HAP-1 (cell line): ENCODE measurements at regions of chr19 and their contacts with region 1.

Region 1: GRCh38 chr19:6048808-6049405 is 61.4 kb downstream of the RFX2 start:
- DNase-seq: peak; percentile 74 to 84
- H3K4me3 ChIP-seq: no peak overlapping the region
- H3K4me1 ChIP-seq: no peaks in the 10 kb centered on the region
- H3K27me3 ChIP-seq: no peaks in the 10 kb centered on the region

Region 2: DNA sequence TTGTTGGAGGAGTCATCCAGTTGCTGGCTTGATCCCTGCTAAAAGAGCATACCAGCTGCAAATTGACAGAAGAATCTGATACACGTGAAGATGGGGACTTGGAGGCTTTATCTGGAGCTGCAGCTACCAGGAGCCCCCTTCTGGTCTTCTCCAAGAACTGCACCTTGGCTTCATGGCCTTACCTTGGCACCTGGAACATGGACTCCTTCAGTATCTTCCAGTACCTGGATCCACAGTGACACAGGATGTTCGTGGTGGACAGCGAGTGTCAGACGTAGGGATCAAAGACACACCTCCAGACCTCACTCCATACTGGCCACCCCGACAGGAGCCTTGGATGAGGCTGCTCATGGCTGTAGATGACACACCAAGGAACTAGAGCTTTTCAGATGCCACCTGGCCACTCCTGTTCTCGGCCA is 76.7 kb after region 1 on chr19:
- in situ Hi-C with region 1: loop called (anchors 5 kb)
- DNase-seq: peak; percentile 71 to 77
- H3K4me3 ChIP-seq: no peak overlapping the region
- H3K4me1 ChIP-seq: no peaks in the 10 kb centered on the region
- H3K27me3 ChIP-seq: no peaks in the 10 kb centered on the region

Region 3: GRCh38 chr19:6164906-6165531 is 116.1 kb after region 1 on chr19:
- in situ Hi-C with region 1: no loop called
- DNase-seq: no peak
- H3K4me3 ChIP-seq: no peak overlapping the region
- H3K4me1 ChIP-seq: no peaks in the 10 kb centered on the region
- H3K27me3 ChIP-seq: no peaks in the 10 kb centered on the region